ENCODE measurements at regions of chr2 and their contacts with region 1.

Region 1: GRCh38 chr2:113304702-113305101 is 26.0 kb upstream of the PAX8 start:
- DNase-seq: no peak
- ATAC-seq: no peak
- H3K4me3 ChIP-seq: no peak overlapping the region
- H3K4me3 Mint-ChIP-seq: no peak overlapping the region
- H3K27ac ChIP-seq: no peak overlapping the region
- H3K27ac Mint-ChIP-seq: no peak overlapping the region
- H3K4me1 ChIP-seq: no peaks in the 10 kb centered on the region
- H3K4me1 Mint-ChIP-seq: no peaks in the 10 kb centered on the region
- H3K27me3 ChIP-seq: peaks cover 0 to 4% of the 10 kb centered on the region in 2 experiments
- H3K27me3 Mint-ChIP-seq: peaks cover 9% of the 10 kb centered on the region
- CTCF ChIP-seq: no peak

Region 2: GRCh38 chr2:113266431-113266830 is 38.3 kb before region 1 on chr2:
- CTCF ChIA-PET with region 1: no interaction called
- POLR2A ChIA-PET with region 1: no interaction called
- intact Hi-C with region 1: loop called in 1 of 2 experiments (anchors 5 kb)
- DNase-seq: no peak
- ATAC-seq: no peak
- H3K4me3 ChIP-seq: no peak overlapping the region
- H3K4me3 Mint-ChIP-seq: no peak overlapping the region
- H3K27ac ChIP-seq: no peak overlapping the region
- H3K27ac Mint-ChIP-seq: no peak overlapping the region
- H3K4me1 ChIP-seq: peaks cover 2% of the 10 kb centered on the region
- H3K4me1 Mint-ChIP-seq: no peaks in the 10 kb centered on the region
- H3K27me3 ChIP-seq: peaks cover 3 to 6% of the 10 kb centered on the region in 2 experiments
- H3K27me3 Mint-ChIP-seq: peaks cover 11% of the 10 kb centered on the region
- CTCF ChIP-seq: no peak

Region 3: DNA sequence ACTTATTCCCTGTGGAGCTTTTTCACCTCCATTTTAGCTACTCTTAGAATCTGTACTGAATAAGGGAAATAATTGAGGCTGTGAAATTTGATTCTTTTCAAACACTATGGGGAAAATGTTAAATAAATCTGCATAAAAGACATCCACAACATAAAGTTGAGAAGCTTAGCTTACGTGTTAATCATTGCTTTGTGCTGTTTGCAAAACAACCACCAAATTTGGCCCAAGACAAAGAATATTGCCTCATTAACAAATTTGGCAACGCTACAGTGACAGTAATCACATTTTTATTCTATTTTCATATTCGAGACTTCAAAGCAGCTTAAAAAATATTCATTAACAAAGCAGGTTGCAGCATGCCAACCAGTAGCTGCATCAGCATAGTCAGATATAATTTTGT is 1575.3 kb after region 1 on chr2:
- CTCF ChIA-PET with region 1: no interaction called
- POLR2A ChIA-PET with region 1: no interaction called
- intact Hi-C with region 1: no loop called
- DNase-seq: no peak
- ATAC-seq: no peak
- H3K4me3 ChIP-seq: no peak overlapping the region
- H3K4me3 Mint-ChIP-seq: no peak overlapping the region
- H3K27ac ChIP-seq: no peak overlapping the region
- H3K27ac Mint-ChIP-seq: no peak overlapping the region
- H3K4me1 ChIP-seq: no peaks in the 10 kb centered on the region
- H3K4me1 Mint-ChIP-seq: no peaks in the 10 kb centered on the region
- H3K27me3 ChIP-seq: no peaks in the 10 kb centered on the region
- H3K27me3 Mint-ChIP-seq: no peaks in the 10 kb centered on the region
- CTCF ChIP-seq: no peak